ENCODE measurements at regions of chr3 and their contacts with region 1.

Region 1: GRCh38 chr3:132730891-132731580 is 8.8 kb upstream of the NPHP3 start:
- DNase-seq: peak; percentile 61
- H3K4me3 ChIP-seq: no peak overlapping the region
- H3K27ac ChIP-seq: no peak overlapping the region
- H3K4me1 ChIP-seq: peaks cover 2% of the 10 kb centered on the region
- H3K27me3 ChIP-seq: peaks cover 7 to 18% of the 10 kb centered on the region in 2 experiments
- CTCF ChIP-seq: peak; percentile 27 to 40
- POLR2A ChIP-seq: no peak

Region 2: GRCh38 chr3:132843851-132844553 is 113.0 kb after region 1 on chr3:
- CTCF ChIA-PET with region 1: no interaction called
- POLR2A ChIA-PET with region 1: no interaction called
- dilution Hi-C with region 1: no loop called
- intact Hi-C with region 1: no loop called
- DNase-seq: no peak
- H3K4me3 ChIP-seq: no peak overlapping the region
- H3K27ac ChIP-seq: no peak overlapping the region
- H3K4me1 ChIP-seq: no peaks in the 10 kb centered on the region
- H3K27me3 ChIP-seq: no peaks in the 10 kb centered on the region
- CTCF ChIP-seq: no peak
- POLR2A ChIP-seq: no peak

Region 3: GRCh38 chr3:133377396-133377795 is 646.4 kb after region 1 on chr3:
- CTCF ChIA-PET with region 1: interaction called, 135 read pairs
- POLR2A ChIA-PET with region 1: no interaction called
- dilution Hi-C with region 1: no loop called
- intact Hi-C with region 1: loop called (anchors 1 kb)
- DNase-seq: peak; percentile 52
- H3K4me3 ChIP-seq: no peak overlapping the region
- H3K27ac ChIP-seq: no peak overlapping the region
- H3K4me1 ChIP-seq: no peaks in the 10 kb centered on the region
- H3K27me3 ChIP-seq: no peaks in the 10 kb centered on the region
- CTCF ChIP-seq: peak; percentile 39 to 41
- POLR2A ChIP-seq: no peak

Region 4: GRCh38 chr3:133426721-133427120 is 695.7 kb after region 1 on chr3:
- CTCF ChIA-PET with region 1: interaction called, 109 read pairs
- POLR2A ChIA-PET with region 1: no interaction called
- dilution Hi-C with region 1: no loop called
- intact Hi-C with region 1: loop called (anchors 1 kb)
- DNase-seq: no peak
- H3K4me3 ChIP-seq: no peak overlapping the region
- H3K27ac ChIP-seq: no peak overlapping the region
- H3K4me1 ChIP-seq: no peaks in the 10 kb centered on the region
- H3K27me3 ChIP-seq: peaks cover 0 to 12% of the 10 kb centered on the region in 2 experiments
- CTCF ChIP-seq: no peak
- POLR2A ChIP-seq: no peak